CD8-positive, alpha-beta T cell (primary cell): ENCODE measurements at regions of chr10 and their contacts with region 1.

Region 1: DNA sequence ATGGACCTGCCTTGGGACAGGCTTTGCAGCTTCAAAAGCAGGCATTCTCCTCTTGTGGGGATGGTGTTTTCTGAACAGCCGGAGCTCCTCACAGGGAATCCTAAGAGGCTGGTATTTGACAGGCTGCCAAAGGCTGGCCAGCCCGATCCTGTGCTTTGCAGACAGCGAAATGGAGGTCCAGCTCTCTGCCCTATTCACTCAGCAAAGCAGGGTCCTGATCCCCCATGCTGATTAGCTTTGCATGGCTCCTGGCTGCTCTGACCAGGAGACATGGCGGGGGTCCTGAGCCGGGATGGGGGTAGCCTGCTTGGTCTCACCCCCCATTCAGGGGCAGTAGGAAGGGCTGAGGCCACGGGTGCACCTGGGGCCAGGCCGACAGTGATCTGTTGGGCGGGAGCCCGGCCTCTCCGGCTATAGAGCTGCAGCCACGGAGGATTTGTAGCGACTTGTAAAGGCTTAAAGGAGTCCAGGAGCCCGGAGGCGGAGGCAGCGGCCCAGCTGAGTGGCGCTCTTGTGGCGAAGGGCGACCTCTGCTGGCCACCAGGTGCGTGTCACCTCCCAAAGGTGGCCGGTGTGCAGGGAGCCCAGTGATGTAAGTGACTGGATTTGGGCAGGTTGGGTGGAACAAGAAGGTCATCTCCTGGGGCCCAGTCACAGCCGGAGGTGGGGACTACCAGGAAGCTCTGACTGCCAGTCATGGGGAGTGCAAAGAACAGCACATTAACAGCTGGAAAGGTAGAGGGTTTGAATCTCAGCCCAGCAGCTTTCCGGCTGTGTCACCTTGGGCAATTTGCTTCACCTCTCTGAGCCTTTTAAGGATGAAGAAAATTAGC is 126.5 kb downstream of the ZMIZ1 start:
- DNase-seq: peak; percentile 56 to 87 (median 76)
- ATAC-seq: peak; percentile 91
- H3K4me3 ChIP-seq: no peak overlapping the region
- H3K4me3 Mint-ChIP-seq: no peak overlapping the region
- H3K27ac ChIP-seq: no peak overlapping the region
- H3K27ac Mint-ChIP-seq: no peak overlapping the region
- H3K4me1 ChIP-seq: peaks cover 4% of the 10 kb centered on the region
- H3K4me1 Mint-ChIP-seq: no peaks in the 10 kb centered on the region
- H3K27me3 ChIP-seq: no peaks in the 10 kb centered on the region
- H3K27me3 Mint-ChIP-seq: no peaks in the 10 kb centered on the region
- CTCF ChIP-seq: peak; percentile 93

Region 2: GRCh38 chr10:77710759-77711682 is 1484.3 kb before region 1 on chr10:
- CTCF ChIA-PET with region 1: no interaction called
- POLR2A ChIA-PET with region 1: no interaction called
- intact Hi-C with region 1: loop called in 1 of 2 experiments (anchors 10 kb)
- DNase-seq: peak; percentile 43 to 82 (median 69)
- ATAC-seq: peak; percentile 97
- H3K4me3 ChIP-seq: peak overlapping the region in 1 of 2 experiments; percentile 40
- H3K4me3 Mint-ChIP-seq: peak overlapping the region; percentile 72
- H3K27ac ChIP-seq: no peak overlapping the region
- H3K27ac Mint-ChIP-seq: no peak overlapping the region
- H3K4me1 ChIP-seq: no peaks in the 10 kb centered on the region
- H3K4me1 Mint-ChIP-seq: peaks cover 6% of the 10 kb centered on the region
- H3K27me3 ChIP-seq: peaks cover 1 to 3% of the 10 kb centered on the region in 2 experiments
- H3K27me3 Mint-ChIP-seq: peaks cover 22% of the 10 kb centered on the region
- CTCF ChIP-seq: peak; percentile 93

Region 3: DNA sequence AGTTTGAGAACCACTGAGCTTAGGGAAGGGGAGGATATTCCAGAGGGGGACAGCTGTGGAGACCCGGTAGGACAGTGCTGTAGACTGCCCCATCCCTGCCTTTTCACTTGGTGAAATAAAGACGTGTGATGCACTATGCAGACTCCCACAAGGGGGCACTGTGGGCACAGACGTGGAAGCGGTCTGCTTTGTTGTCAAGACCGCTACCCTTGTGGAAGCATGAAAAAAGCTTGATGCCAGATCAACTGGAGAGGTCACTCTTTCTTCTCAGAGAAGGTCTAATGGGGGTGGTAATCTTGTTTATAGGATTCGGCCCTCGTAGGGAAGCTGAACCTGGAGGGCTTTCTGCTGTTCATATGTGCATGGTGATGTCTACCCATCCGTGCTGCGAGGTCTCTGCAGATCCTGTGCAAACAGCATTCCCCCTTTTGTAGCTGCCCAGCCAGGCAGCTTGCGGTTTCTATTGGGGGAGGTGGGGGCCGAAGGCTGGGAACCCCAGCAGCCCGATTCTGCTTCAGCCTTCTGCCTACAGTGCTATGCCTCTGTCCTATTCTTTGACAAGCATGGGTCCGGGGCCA is 1147.9 kb before region 1 on chr10:
- CTCF ChIA-PET with region 1: interaction called, 204 read pairs
- POLR2A ChIA-PET with region 1: no interaction called
- intact Hi-C with region 1: loop called in 1 of 2 experiments (anchors 1 kb)
- DNase-seq: peak; percentile 69 to 88 (median 81)
- ATAC-seq: peak; percentile 96
- H3K4me3 ChIP-seq: no peak overlapping the region
- H3K4me3 Mint-ChIP-seq: no peak overlapping the region
- H3K27ac ChIP-seq: no peak overlapping the region
- H3K27ac Mint-ChIP-seq: no peak overlapping the region
- H3K4me1 ChIP-seq: peaks cover 9% of the 10 kb centered on the region
- H3K4me1 Mint-ChIP-seq: peaks cover 14% of the 10 kb centered on the region
- H3K27me3 ChIP-seq: no peaks in the 10 kb centered on the region
- H3K27me3 Mint-ChIP-seq: no peaks in the 10 kb centered on the region
- CTCF ChIP-seq: peak; percentile 74

Region 4: GRCh38 chr10:78302989-78303854 is 892.1 kb before region 1 on chr10:
- CTCF ChIA-PET with region 1: interaction called, 6 read pairs
- POLR2A ChIA-PET with region 1: no interaction called
- intact Hi-C with region 1: loop called in 1 of 2 experiments (anchors 5 kb)
- DNase-seq: peak; percentile 94 to 99 (median 96)
- ATAC-seq: peak; percentile 92
- H3K4me3 ChIP-seq: peak overlapping the region; percentile 73 to 82
- H3K4me3 Mint-ChIP-seq: peak overlapping the region; percentile 97
- H3K27ac ChIP-seq: peak overlapping the region; percentile 76 to 92
- H3K27ac Mint-ChIP-seq: peak overlapping the region; percentile 97
- H3K4me1 ChIP-seq: peaks cover 17% of the 10 kb centered on the region
- H3K4me1 Mint-ChIP-seq: peaks cover 20% of the 10 kb centered on the region
- H3K27me3 ChIP-seq: no peaks in the 10 kb centered on the region
- H3K27me3 Mint-ChIP-seq: no peaks in the 10 kb centered on the region
- CTCF ChIP-seq: peak; percentile 79

Region 5: DNA sequence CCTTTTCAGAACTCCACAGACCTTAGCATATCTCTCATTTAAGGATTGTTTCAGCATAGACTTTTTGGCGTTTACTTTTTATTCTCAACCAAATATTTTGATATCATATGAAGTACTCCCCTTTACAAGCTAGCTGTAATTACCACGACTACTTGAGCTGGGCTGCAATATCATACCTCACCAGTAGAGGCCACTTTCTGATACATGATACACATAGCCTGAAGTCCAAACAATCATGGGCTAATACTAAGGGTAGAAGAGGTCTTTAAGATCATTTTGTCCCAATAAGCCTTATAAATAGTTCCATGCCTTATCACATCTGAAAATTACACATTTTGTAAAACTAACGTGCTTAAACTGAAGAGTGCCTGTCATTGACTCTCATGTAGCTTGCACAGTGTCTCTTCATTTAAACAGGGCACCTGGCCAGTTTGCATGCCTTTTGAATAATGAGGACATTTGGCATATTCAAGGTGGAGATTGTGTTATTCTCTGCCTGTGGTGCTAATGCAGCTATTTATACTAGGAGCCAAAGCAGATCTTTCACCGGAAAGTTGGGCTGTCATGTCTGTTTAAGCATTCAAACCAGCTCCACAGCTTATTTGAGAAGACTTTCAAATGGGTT is 530.3 kb before region 1 on chr10:
- CTCF ChIA-PET with region 1: interaction called, 19 read pairs
- POLR2A ChIA-PET with region 1: no interaction called
- intact Hi-C with region 1: loop called in 1 of 2 experiments (anchors 2 kb)
- DNase-seq: peak in 2 of 9 experiments; percentile 12 to 34
- ATAC-seq: no peak
- H3K4me3 ChIP-seq: no peak overlapping the region
- H3K4me3 Mint-ChIP-seq: no peak overlapping the region
- H3K27ac ChIP-seq: no peak overlapping the region
- H3K27ac Mint-ChIP-seq: no peak overlapping the region
- H3K4me1 ChIP-seq: no peaks in the 10 kb centered on the region
- H3K4me1 Mint-ChIP-seq: no peaks in the 10 kb centered on the region
- H3K27me3 ChIP-seq: no peaks in the 10 kb centered on the region
- H3K27me3 Mint-ChIP-seq: peaks cover 32% of the 10 kb centered on the region
- CTCF ChIP-seq: peak; percentile 25

Region 6: DNA sequence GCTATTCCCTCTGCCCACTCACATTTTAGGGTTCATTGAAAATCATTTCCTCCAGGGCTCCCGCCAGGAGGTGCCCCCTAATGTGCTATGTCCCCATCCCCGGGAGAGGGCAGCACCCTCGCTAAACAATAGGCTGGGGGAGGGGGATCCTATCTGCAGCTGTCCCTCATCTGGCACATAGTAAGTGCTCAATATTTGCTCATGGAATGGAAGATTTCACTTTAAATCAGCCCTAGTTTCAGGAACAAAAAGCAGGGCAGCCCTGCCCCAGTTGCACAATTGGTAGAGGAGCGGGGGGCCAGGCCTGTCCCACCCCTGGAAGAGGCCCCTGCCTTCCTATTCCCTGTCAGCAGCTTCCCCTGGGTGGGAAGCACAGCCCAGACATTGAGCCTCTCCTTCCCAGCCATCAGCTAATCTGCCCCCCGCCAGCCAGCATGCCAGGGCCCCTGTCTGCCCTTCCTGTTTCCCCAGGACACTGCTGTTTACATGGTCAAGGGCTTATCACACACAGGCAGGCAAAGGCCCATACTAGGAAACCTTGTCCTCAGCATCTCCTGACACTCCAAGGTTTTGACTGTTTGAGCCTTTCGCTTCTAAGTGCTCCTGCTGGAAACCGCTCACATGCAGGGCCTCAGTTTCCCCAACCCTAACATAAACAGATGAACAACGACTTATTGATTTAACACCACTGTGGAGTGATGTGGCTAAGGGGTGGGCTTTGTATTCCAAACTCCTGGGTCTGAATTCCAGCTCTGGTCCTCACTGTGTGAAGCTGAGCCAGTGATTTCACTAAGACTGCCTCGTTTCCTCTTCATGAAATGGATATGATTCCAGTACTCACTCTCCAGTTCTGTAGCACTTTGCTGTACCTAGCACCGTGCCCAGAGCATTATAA is 257.3 kb before region 1 on chr10:
- CTCF ChIA-PET with region 1: interaction called, 21 read pairs
- POLR2A ChIA-PET with region 1: no interaction called
- intact Hi-C with region 1: loop called (anchors 2 to 5 kb)
- DNase-seq: peak in 3 of 9 experiments; percentile 15 to 43 (median 28)
- ATAC-seq: no peak
- H3K4me3 ChIP-seq: no peak overlapping the region
- H3K4me3 Mint-ChIP-seq: no peak overlapping the region
- H3K27ac ChIP-seq: no peak overlapping the region
- H3K27ac Mint-ChIP-seq: no peak overlapping the region
- H3K4me1 ChIP-seq: no peaks in the 10 kb centered on the region
- H3K4me1 Mint-ChIP-seq: no peaks in the 10 kb centered on the region
- H3K27me3 ChIP-seq: no peaks in the 10 kb centered on the region
- H3K27me3 Mint-ChIP-seq: no peaks in the 10 kb centered on the region
- CTCF ChIP-seq: no peak

Region 7: GRCh38 chr10:79170993-79171392 is 24.3 kb before region 1 on chr10:
- CTCF ChIA-PET with region 1: interaction called, 12 read pairs
- POLR2A ChIA-PET with region 1: no interaction called
- intact Hi-C with region 1: no loop called
- DNase-seq: no peak
- ATAC-seq: no peak
- H3K4me3 ChIP-seq: no peak overlapping the region
- H3K4me3 Mint-ChIP-seq: no peak overlapping the region
- H3K27ac ChIP-seq: no peak overlapping the region
- H3K27ac Mint-ChIP-seq: no peak overlapping the region
- H3K4me1 ChIP-seq: no peaks in the 10 kb centered on the region
- H3K4me1 Mint-ChIP-seq: no peaks in the 10 kb centered on the region
- H3K27me3 ChIP-seq: no peaks in the 10 kb centered on the region
- H3K27me3 Mint-ChIP-seq: no peaks in the 10 kb centered on the region
- CTCF ChIP-seq: no peak

Region 8: DNA sequence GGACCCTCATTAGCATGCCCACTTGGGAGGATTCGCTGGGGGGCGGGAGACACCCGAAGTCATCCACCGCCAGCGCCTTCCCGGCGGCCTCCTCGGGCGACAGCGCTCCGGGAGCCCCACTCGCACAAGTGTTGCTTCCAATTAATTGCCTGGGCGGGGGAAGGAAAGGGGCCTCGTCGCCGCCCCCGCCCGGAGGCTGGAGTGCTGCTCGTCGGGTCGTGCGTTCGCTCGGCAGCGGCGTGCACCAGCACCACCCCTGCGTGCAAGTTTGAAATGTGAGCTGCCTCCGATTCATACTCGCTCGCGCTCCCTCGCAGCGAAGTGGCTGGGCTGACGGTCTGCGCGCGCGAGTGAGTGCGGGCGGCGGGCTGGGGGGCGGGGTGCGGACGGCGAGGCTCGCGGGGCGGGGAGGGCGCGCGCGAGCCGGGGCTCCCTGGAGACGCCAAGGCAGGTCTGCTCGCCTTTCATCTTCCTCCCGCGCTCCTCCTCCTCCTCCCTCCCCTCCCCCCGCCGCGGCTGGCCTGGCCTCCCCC is 47.4 kb after region 1 on chr10:
- CTCF ChIA-PET with region 1: no interaction called
- POLR2A ChIA-PET with region 1: no interaction called
- intact Hi-C with region 1: no loop called
- DNase-seq: peak in 8 of 9 experiments; percentile 13 to 80 (median 51)
- ATAC-seq: peak; percentile 51
- H3K4me3 ChIP-seq: peak overlapping the region; percentile 49 to 61
- H3K4me3 Mint-ChIP-seq: peak overlapping the region; percentile 76
- H3K27ac ChIP-seq: peak overlapping the region in 1 of 2 experiments; percentile 39
- H3K27ac Mint-ChIP-seq: no peak overlapping the region
- H3K4me1 ChIP-seq: peaks cover 33% of the 10 kb centered on the region
- H3K4me1 Mint-ChIP-seq: peaks cover 42% of the 10 kb centered on the region
- H3K27me3 ChIP-seq: no peaks in the 10 kb centered on the region
- H3K27me3 Mint-ChIP-seq: no peaks in the 10 kb centered on the region
- CTCF ChIP-seq: no peak